ENCODE measurements at regions of chr7 and their contacts with region 1.

Region 1: DNA sequence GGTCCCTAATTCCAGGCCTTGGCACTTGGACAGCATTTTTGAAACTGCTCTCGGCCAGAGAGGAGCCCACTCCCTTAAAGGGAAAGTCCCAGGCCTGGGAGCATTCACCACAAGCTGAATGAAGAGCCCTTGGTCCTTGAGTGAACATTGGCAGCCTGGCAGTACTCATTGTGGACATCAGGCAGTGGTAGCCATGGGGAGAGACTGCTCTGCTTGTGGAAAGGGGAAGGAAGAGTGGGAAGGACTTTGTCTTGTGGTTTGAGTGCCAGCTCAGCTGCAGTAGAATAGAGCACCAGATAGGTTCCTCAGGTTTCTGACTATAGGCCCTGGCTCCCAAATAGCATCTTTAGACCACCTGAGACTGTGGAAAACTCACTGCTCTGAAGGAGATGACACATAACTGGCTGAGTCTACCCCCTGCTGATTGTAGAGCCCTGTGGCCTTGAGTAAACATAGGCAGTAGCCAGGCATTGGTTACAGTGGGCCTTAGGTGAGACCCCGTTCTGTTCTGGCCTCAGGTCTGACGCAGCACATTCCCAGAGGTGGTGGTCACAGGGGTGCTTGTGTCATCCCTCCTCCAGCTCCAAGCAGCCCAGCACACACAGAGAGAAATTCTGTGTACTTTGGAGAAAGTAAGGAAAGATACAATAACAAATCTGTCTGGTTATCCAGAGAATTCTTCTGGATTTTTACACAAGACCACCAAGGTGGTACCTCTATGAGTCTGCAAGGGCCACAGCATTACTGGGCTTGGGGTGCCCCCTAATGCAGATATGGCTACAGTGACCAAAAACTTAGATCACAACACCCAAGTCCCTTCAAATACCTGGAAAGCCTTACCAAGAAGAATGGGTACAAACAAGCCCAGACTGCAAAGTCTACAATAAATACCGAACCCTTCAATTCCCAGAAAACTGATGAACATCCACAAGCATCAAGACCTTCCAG is 153.8 kb downstream of the GNAI1 start:
- DNase-seq: peak in 6 of 10 donors; percentile 21 to 62 (median 44)
- H3K4me3 ChIP-seq: no peak overlapping the region
- H3K27ac ChIP-seq: peak overlapping the region in 5 of 59 donors; percentile 4 to 18 (median 14)
- H3K27me3 ChIP-seq: no peaks in the 10 kb centered on the region
- CTCF ChIP-seq: peak in 53 of 56 donors; percentile 13 to 77 (median 49)

Region 2: GRCh38 chr7:80060218-80060806 is 228.1 kb before region 1 on chr7:
- intact Hi-C with region 1: loop called (anchors 2 to 10 kb)
- DNase-seq: no peak
- H3K4me3 ChIP-seq: no peak overlapping the region
- H3K27ac ChIP-seq: no peak overlapping the region
- H3K27me3 ChIP-seq: no peaks in the 10 kb centered on the region
- CTCF ChIP-seq: peak; percentile 58 to 95 (median 78)

Region 3: DNA sequence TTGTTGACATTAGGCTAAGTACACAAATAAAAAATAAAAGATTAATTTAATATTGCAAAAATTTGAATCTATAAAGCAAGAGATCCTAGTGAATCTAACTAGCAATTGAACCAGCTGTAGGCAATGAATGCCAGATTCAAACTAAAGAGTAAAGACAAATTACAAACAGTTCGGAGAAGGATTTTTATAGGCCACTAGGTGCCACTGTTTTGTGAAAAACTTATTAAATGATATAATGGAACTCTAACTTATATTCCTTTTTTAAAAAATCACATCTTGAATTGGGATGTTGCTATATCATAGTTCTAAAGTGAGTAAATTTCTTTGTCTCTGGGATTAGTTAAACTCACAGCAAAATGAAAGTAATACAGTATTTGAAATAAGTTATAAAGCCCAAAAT is 192.9 kb before region 1 on chr7:
- intact Hi-C with region 1: loop called in 1 of 2 experiments (anchors 10 kb)
- DNase-seq: no peak
- H3K4me3 ChIP-seq: no peak overlapping the region
- H3K27ac ChIP-seq: peak overlapping the region in 4 of 59 donors; percentile 4 to 24 (median 22)
- H3K27me3 ChIP-seq: no peaks in the 10 kb centered on the region
- CTCF ChIP-seq: peak; percentile 49 to 89 (median 69)

Region 4: GRCh38 chr7:80186721-80187120 is 101.7 kb before region 1 on chr7:
- intact Hi-C with region 1: loop called in 1 of 2 experiments (anchors 5 kb)
- DNase-seq: peak in 1 of 10 donors; percentile 36
- H3K4me3 ChIP-seq: peak overlapping the region in 18 of 59 donors; percentile 2 to 40 (median 23)
- H3K27ac ChIP-seq: peak overlapping the region; percentile 65 to 99 (median 95)
- H3K27me3 ChIP-seq: no peaks in the 10 kb centered on the region
- CTCF ChIP-seq: no peak

Region 5: GRCh38 chr7:80197627-80198026 is 90.8 kb before region 1 on chr7:
- intact Hi-C with region 1: no loop called
- DNase-seq: no peak
- H3K4me3 ChIP-seq: no peak overlapping the region
- H3K27ac ChIP-seq: peak overlapping the region in 41 of 59 donors; percentile 10 to 99 (median 93)
- H3K27me3 ChIP-seq: no peaks in the 10 kb centered on the region
- CTCF ChIP-seq: no peak

Region 6: GRCh38 chr7:80218723-80219122 is 69.7 kb before region 1 on chr7:
- intact Hi-C with region 1: no loop called
- DNase-seq: no peak
- H3K4me3 ChIP-seq: no peak overlapping the region
- H3K27ac ChIP-seq: peak overlapping the region in 22 of 59 donors; percentile 0 to 70 (median 40)
- H3K27me3 ChIP-seq: no peaks in the 10 kb centered on the region
- CTCF ChIP-seq: no peak

Region 7: DNA sequence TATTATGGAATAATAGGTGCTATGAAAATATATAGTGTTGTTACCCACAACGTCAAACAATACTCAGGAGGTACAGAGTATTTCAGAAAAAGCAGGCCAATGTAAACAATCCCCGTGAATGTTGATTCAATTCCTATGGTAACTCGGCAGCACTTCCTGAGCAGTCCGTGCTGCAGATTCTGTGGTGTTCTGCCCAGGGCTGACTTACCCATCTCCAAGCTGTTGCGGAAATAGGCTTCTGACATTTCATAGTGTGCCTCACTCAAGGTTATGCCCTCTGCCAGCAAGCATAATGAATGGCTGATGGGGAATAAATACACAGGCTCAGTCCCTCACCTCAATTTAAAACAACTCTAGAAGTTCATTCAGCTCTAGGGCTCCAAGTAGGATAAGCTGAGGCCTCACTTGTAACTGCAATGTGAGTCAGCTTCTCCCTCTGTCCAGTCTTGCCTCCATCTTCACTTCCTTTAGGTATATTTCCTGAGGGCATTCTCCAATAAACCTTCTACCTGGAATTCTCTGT is 23.8 kb after region 1 on chr7:
- intact Hi-C with region 1: no loop called
- DNase-seq: no peak
- H3K4me3 ChIP-seq: no peak overlapping the region
- H3K27ac ChIP-seq: no peak overlapping the region
- H3K27me3 ChIP-seq: no peaks in the 10 kb centered on the region
- CTCF ChIP-seq: no peak

Region 8: DNA sequence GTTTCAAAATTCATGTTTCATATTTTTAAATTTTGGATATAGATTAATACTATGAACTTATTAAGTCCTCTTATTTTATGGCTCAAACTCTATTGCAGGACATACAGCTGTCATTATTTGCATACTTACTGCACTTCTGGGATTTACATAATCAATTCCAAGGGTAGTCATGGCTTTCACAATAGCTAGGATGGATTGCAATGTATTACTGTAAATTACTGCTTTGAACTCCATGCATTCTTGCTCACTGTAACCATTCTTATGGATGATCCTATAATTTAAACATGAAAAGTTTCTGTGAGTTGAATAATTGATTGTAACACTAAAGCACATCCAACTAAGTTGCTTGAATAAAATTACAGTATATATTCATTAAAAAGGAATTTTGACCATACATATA is 200.0 kb after region 1 on chr7:
- intact Hi-C with region 1: no loop called
- DNase-seq: no peak
- H3K4me3 ChIP-seq: no peak overlapping the region
- H3K27ac ChIP-seq: no peak overlapping the region
- H3K27me3 ChIP-seq: no peaks in the 10 kb centered on the region
- CTCF ChIP-seq: no peak